ENCODE measurements at regions of chr17 and their contacts with region 1.

Region 1: DNA sequence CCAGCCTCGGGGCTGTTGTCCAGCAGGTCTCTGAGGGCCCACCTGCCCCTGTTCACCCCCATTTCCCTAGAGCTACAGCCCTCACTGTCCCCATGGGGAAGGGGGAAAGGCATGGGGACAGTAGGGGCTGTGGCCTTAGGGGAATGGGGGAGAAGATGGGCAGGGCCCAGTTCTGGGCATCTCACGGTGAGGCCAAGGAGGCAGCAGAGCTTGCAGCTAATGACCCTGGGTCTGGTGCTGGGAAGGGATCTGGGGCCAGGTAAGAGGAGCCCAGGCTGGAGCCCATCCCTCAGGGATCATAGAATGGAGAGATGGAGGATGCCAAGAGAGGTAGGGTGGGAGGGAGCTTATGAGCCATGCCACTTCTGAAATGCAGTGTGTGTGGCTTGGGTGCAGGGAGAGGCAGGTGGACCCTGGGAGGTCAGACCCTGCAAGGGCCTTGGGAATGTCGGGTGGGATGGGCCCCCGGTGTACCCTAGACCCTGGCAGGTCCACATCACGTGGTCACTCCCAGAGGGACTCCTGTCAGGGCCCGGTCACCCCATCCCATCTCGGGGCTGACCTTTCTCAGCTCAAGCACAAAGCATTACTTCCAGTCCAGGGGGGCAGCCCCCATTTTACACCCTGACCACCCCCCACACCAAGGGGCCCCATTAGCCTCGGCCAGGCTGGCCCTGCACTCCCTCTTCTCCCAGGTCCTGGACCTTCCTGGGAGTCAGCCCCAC is 35.9 kb upstream of the KSR1 start:
- DNase-seq: no peak
- H3K4me3 ChIP-seq: no peak overlapping the region
- H3K27ac ChIP-seq: no peak overlapping the region
- H3K4me1 ChIP-seq: peaks cover 0 to 4% (median 1%) of the 10 kb centered on the region in 4 experiments
- H3K27me3 ChIP-seq: no peaks in the 10 kb centered on the region

Region 2: GRCh38 chr17:27390540-27390939 is 29.8 kb before region 1 on chr17:
- CTCF ChIA-PET with region 1: interaction called, 11 read pairs
- POLR2A ChIA-PET with region 1: no interaction called
- DNase-seq: no peak
- H3K4me3 ChIP-seq: no peak overlapping the region
- H3K27ac ChIP-seq: no peak overlapping the region
- H3K4me1 ChIP-seq: peaks cover 0 to 14% (median 8%) of the 10 kb centered on the region in 4 experiments
- H3K27me3 ChIP-seq: peaks cover 0 to 2% (median 0%) of the 10 kb centered on the region in 5 experiments

Region 3: GRCh38 chr17:27446569-27447301 is 26.3 kb after region 1 on chr17:
- CTCF ChIA-PET with region 1: no interaction called
- POLR2A ChIA-PET with region 1: no interaction called
- DNase-seq: no peak
- H3K4me3 ChIP-seq: no peak overlapping the region
- H3K27ac ChIP-seq: no peak overlapping the region
- H3K4me1 ChIP-seq: peaks cover 0 to 3% (median 0%) of the 10 kb centered on the region in 4 experiments
- H3K27me3 ChIP-seq: no peaks in the 10 kb centered on the region

Region 4: GRCh38 chr17:27783440-27784350 is 363.3 kb after region 1 on chr17:
- CTCF ChIA-PET with region 1: no interaction called
- POLR2A ChIA-PET with region 1: no interaction called
- DNase-seq: no peak
- H3K4me3 ChIP-seq: no peak overlapping the region
- H3K27ac ChIP-seq: no peak overlapping the region
- H3K4me1 ChIP-seq: peaks cover 0 to 5% (median under 1%) of the 10 kb centered on the region in 4 experiments
- H3K27me3 ChIP-seq: no peaks in the 10 kb centered on the region

Measured in common myeloid progenitor, CD34-positive (primary cell).